ENCODE measurements at regions of chr2 and their contacts with region 1.

Region 1: DNA sequence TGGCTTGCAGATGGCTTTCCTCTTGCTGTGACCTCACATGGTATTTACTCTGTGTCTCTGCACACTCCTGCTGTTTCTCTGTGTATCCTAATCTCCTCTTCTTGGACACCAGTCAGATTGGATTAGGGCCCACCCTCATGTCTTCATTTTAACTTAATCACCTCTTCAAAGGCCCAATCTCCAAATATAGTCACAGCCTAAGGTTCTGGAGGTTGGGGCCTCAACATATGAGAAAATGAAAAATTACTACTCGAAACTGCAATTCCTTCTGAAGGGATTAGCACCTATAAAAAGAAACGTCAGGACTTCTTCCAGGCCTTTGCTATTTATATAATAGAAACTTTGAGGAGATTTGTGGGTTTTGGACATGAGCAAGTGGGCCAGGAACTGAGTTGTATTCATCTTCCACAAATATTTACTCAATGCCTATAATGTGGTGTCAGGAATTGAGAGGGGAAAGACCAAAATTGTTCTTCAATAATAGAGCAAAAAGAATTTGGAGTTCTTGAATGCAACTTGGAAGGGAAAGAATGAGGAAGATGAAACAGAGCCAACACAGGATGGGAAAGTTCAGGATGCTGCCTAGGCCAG is 270.0 kb upstream of the FN1 start:
- H3K4me3 Mint-ChIP-seq: no peak overlapping the region
- H3K27ac Mint-ChIP-seq: peak overlapping the region; percentile 66
- H3K4me1 Mint-ChIP-seq: peaks cover 56% of the 10 kb centered on the region
- H3K27me3 Mint-ChIP-seq: peaks cover 2% of the 10 kb centered on the region

Region 2: GRCh38 chr2:215743066-215743465 is 37.2 kb after region 1 on chr2:
- intact Hi-C with region 1: loop called (anchors 5 kb)
- H3K4me3 Mint-ChIP-seq: no peak overlapping the region
- H3K27ac Mint-ChIP-seq: peak overlapping the region; percentile 87
- H3K4me1 Mint-ChIP-seq: peaks cover 84% of the 10 kb centered on the region
- H3K27me3 Mint-ChIP-seq: no peaks in the 10 kb centered on the region

Region 3: DNA sequence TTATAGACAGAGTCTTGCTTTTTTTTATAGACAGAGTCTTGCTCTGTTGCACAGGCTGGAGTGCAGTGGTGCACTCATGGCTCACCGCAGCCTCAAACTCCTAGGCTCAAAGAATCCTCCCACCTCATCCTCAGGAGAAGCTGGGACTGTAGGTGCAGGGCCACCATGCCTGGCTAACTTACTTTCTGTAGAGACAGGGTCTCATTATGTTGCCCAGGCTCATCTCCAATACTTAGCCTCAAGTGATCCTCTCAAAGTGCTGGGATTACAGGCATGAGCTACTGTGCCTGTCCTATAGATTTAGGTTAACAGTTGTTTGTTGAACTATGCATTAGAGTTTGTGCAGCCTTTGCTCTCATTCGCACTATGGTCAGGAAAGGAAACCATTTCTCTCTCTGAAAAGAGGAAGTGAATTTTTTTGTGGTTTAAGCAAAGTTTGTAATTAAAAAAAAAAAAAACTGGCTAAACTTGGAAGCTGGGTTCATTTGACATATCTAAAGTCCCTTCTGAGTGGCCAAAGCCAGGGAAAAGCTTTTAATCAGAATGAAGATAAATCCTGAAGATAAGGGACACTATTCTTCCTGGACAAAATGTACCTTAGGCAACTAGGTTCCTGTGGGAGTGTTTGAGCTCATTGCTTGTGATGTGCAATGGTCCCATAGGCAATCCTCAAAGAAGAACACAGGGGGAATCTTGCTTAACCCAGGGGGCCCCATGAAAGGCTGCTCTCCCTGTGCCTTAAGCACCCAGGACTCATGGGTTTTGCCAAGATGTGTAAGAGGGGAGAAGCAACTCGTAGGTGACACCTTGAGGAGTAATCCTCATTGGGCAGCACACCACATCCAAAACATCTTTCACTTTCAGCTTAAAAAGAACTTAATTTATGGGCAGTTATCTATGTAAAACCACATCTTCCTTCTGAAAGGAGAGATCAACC is 105.8 kb after region 1 on chr2:
- intact Hi-C with region 1: loop called (anchors 10 kb)
- H3K4me3 Mint-ChIP-seq: no peak overlapping the region
- H3K27ac Mint-ChIP-seq: peak overlapping the region; percentile 56
- H3K4me1 Mint-ChIP-seq: peaks cover 36% of the 10 kb centered on the region
- H3K27me3 Mint-ChIP-seq: peaks cover 22% of the 10 kb centered on the region

Measured in dendritic cell treated with granulocyte-macrophage colony-stimulating factor and Interleukin-4, amounts not matched to agents 40 ng/mL and 50 ng/mL, for 4 days (primary cell).